ENCODE measurements at regions of chr5 and their contacts with region 1.

Region 1: GRCh38 chr5:58383459-58383858 is 76.4 kb downstream of the PLK2 start:
- DNase-seq: no peak
- H3K4me3 ChIP-seq: no peak overlapping the region
- H3K27ac ChIP-seq: no peak overlapping the region
- H3K4me1 ChIP-seq: no peaks in the 10 kb centered on the region
- H3K27me3 ChIP-seq: no peaks in the 10 kb centered on the region
- CTCF ChIP-seq: no peak

Region 2: DNA sequence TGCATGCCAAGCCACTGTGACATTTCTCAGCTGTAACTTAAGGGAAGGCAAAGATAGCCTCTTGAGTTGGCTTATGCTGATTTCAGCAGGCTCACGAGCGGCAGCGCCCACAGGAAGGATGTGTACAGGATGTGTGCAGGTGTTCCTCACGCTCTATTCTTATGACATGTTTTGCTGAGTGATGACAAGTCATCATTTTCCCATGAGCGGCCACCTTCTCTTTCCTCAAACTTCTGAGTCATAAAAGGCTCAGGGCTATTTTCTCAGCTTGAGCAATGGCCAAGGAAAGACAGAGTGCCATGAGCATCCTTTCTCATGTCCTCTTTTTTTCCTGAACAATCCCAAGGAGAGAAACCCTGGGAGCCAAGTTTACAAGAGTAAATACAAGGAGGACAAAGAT is 289.4 kb before region 1 on chr5:
- CTCF ChIA-PET with region 1: no interaction called
- POLR2A ChIA-PET with region 1: no interaction called
- intact Hi-C with region 1: no loop called
- DNase-seq: peak; percentile 72 to 96
- H3K4me3 ChIP-seq: no peak overlapping the region
- H3K27ac ChIP-seq: peak overlapping the region; percentile 92
- H3K4me1 ChIP-seq: peaks cover 25% of the 10 kb centered on the region
- H3K27me3 ChIP-seq: no peaks in the 10 kb centered on the region
- CTCF ChIP-seq: no peak

Region 3: GRCh38 chr5:58172946-58173345 is 210.5 kb before region 1 on chr5:
- CTCF ChIA-PET with region 1: no interaction called
- POLR2A ChIA-PET with region 1: no interaction called
- intact Hi-C with region 1: no loop called
- DNase-seq: no peak
- H3K4me3 ChIP-seq: no peak overlapping the region
- H3K27ac ChIP-seq: no peak overlapping the region
- H3K4me1 ChIP-seq: no peaks in the 10 kb centered on the region
- H3K27me3 ChIP-seq: no peaks in the 10 kb centered on the region
- CTCF ChIP-seq: no peak

Region 4: GRCh38 chr5:58311519-58311918 is 71.9 kb before region 1 on chr5:
- CTCF ChIA-PET with region 1: no interaction called
- POLR2A ChIA-PET with region 1: interaction called, 13 read pairs
- intact Hi-C with region 1: no loop called
- DNase-seq: no peak
- H3K4me3 ChIP-seq: no peak overlapping the region
- H3K27ac ChIP-seq: no peak overlapping the region
- H3K4me1 ChIP-seq: no peaks in the 10 kb centered on the region
- H3K27me3 ChIP-seq: no peaks in the 10 kb centered on the region
- CTCF ChIP-seq: no peak

Region 5: GRCh38 chr5:58491216-58491892 is 107.9 kb after region 1 on chr5 and contains the start of gene GAPT:
- CTCF ChIA-PET with region 1: no interaction called
- POLR2A ChIA-PET with region 1: no interaction called
- intact Hi-C with region 1: no loop called
- DNase-seq: no peak
- H3K4me3 ChIP-seq: no peak within 1 kb of the TSS
- H3K27ac ChIP-seq: no peak within 1 kb of the TSS
- H3K4me1 ChIP-seq: no peaks in the 10 kb centered on the region
- H3K27me3 ChIP-seq: no peaks in the 10 kb centered on the region
- CTCF ChIP-seq: no peak
- total RNA-seq, gene GAPT: not detected in 2 replicates